ENCODE measurements at regions of chrX and their contacts with region 1.

Region 1: DNA sequence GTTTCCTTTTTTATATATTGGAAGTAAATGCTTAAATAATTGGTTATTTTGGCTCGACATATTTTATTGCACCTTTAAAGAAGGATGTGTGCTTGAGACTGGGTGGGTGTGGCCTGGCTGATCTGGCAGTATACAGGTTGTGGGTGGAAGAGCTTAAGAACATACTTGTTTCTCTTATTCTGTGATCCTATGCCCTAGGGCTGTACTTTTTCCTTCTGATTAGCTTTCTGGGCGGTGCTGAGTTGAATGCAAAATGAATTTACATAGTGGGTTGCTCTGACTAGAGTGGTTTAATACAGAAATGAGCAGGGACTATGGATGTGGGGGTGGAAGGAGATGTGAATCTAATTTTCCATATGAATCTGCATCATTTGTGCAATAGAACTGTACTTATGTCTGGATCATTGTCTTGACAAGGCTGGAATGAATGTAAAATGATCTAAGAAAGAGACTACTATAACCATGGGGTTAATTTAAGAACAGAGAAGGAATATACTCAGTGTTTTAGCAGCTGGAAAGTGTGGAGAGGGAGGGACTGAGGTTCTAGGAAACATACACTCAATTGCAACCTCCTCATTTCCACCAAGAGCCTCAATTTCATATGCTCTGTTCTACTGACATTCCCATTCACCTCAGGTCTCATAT is 73.7 kb downstream of the RLIM start:
- DNase-seq: no peak
- H3K4me3 ChIP-seq: no peak overlapping the region
- H3K27ac ChIP-seq: no peak overlapping the region
- H3K4me1 ChIP-seq: peaks cover 0 to 2% (median 0%) of the 10 kb centered on the region in 3 donors
- H3K27me3 ChIP-seq: no peaks in the 10 kb centered on the region
- CTCF ChIP-seq: no peak

Region 2: DNA sequence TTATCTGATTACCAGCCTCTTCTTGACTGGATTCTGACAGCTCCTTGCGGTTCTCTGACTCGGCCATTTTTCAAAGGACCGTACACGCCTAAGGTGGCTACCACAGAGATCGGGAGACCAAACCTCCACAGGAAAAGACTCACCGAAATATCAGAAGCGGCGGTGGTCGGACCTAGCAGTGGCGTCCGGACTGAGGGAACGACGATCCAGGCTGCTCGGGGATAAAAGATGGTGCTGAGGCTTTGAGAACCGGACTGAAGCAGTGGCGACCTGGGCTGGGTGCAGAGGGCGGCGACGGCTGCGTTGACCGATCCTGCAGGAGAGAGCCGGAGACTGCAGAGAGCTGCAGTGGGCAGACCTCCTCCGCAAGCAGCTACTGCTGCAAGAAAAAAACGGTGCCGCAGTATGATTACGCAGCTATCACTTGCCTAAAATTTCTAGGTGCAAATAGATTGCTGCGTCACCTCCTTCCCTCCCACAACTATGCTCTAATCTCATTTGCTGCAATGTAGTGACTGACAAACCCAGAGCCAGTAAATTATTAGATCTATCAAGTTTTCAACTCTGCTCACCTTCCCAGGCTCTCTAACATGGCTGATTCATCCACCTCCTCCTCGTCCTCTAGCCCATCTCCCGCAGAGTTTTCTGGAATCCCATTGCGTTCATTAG is 1326.2 kb before region 1 on chrX and contains the start of gene NAP1L2:
- intact Hi-C with region 1: no loop called
- DNase-seq: peak; percentile 33 to 66 (median 41)
- H3K4me3 ChIP-seq: peak within 1 kb of the TSS; percentile 58 to 77 (median 71)
- H3K27ac ChIP-seq: peak within 1 kb of the TSS; percentile 22 to 26
- H3K4me1 ChIP-seq: no peaks in the 10 kb centered on the region
- H3K27me3 ChIP-seq: peaks cover 3% of the 10 kb centered on the region
- CTCF ChIP-seq: no peak
- total RNA-seq, gene NAP1L2: 9.8 TPM

Region 3: DNA sequence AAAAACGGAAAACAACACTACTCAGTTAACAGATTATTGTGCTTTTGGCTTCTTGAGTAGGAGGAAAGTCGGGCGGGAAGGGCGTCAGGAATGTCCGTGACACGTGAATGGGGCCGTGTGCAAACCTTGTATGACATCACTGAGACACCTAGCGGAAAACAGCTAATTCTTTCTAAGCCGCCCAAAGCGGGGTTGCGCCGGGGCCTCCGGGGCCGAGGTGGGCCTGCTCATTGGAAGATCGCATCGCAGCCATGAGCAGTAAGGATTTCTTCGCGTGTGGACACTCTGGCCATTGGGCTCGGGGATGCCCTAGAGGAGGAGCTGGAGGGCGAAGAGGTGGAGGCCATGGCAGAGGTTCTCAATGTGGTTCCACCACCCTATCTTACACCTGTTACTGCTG is 236.7 kb before region 1 on chrX and contains the start of gene ZCCHC13:
- intact Hi-C with region 1: no loop called
- DNase-seq: no peak
- H3K4me3 ChIP-seq: no peak within 1 kb of the TSS
- H3K27ac ChIP-seq: no peak within 1 kb of the TSS
- H3K4me1 ChIP-seq: no peaks in the 10 kb centered on the region
- H3K27me3 ChIP-seq: no peaks in the 10 kb centered on the region
- CTCF ChIP-seq: no peak
- total RNA-seq, gene ZCCHC13: not detected

Region 4: GRCh38 chrX:74382613-74383012 is 158.1 kb before region 1 on chrX:
- intact Hi-C with region 1: loop called (anchors 10 kb)
- DNase-seq: peak in 4 of 5 donors; percentile 44 to 68 (median 50)
- H3K4me3 ChIP-seq: no peak overlapping the region
- H3K27ac ChIP-seq: no peak overlapping the region
- H3K4me1 ChIP-seq: no peaks in the 10 kb centered on the region
- H3K27me3 ChIP-seq: no peaks in the 10 kb centered on the region
- CTCF ChIP-seq: peak; percentile 43